Transverse colon (tissue), 4 donors: ENCODE measurements at regions of chr9 and their contacts with region 1.

Region 1: DNA sequence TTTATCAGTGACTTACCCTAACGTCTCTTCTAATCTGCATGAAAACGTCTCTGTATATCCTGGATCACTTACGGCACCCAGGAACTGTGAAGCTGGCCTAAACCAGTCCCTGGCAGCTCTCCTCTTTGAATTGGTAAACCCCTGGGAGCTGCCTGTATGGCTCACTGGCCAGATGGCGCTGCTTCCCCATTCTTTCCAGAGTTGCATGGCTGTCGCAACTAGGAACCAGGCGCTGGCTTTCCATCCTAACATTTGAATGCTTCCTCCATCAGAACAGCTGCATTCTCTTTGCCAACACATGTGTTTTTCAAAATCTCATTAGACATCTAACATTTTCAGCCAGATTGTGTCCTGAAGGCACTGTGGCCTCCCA is 8.0 kb upstream of the PCA3 start:
- DNase-seq: peak; percentile 31
- H3K4me3 ChIP-seq: no peak overlapping the region
- H3K27ac ChIP-seq: no peak overlapping the region
- H3K4me1 ChIP-seq: peaks cover 0 to 12% (median 0%) of the 10 kb centered on the region in 4 donors
- H3K27me3 ChIP-seq: no peaks in the 10 kb centered on the region
- CTCF ChIP-seq: peak in 2 of 5 experiments; percentile 30 to 34
- EP300 ChIP-seq: no peak
- POLR2A ChIP-seq: no peak

Region 2: DNA sequence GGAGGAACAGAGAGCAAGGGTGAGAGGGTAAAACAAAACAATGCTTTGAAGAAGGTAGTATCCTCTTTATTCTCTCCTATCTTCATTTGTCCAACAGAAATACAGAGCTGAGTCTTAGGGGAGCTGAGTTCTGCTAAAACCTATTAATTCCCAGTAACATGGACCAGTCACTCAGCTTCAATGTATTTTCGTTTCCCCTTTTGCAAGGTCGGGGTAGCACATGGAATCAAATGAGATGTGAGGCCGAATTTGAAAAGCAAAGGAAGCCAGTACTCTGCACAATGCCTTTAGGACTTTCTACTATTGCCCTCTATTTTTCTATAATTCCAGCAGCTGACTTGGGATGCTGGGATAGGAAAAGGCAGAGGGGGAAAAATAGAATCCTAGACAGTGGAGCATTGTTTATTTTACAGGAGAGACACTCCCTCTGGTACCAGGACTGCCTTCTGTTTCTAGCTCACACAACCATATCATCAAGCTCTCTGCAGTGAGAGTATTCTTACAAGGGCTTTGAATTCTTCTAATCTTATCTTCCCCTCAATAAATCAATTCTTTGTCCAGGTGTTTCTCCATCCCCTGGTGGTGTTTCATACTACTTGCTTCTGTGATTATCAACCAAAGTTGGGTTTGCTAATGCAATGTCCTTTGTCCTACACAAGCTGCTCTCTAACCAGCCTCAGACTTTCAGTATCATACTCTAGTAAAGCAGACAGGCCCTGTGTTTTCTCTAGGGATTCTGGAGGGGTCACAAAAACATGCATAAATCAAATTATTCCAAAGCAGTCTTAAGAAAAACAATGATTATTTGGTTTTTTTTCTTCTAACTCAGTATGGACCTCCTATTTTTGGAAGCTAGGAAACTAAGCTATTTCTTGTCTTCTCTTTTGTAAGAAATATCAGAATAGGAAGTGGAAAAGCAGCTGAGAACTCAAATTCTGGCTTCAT is 1326.5 kb before region 1 on chr9:
- in situ Hi-C with region 1: no loop called
- intact Hi-C with region 1: no loop called
- DNase-seq: no peak
- H3K4me3 ChIP-seq: no peak overlapping the region
- H3K27ac ChIP-seq: no peak overlapping the region
- H3K4me1 ChIP-seq: no peaks in the 10 kb centered on the region
- H3K27me3 ChIP-seq: no peaks in the 10 kb centered on the region
- CTCF ChIP-seq: no peak
- EP300 ChIP-seq: no peak
- POLR2A ChIP-seq: no peak

Region 3: DNA sequence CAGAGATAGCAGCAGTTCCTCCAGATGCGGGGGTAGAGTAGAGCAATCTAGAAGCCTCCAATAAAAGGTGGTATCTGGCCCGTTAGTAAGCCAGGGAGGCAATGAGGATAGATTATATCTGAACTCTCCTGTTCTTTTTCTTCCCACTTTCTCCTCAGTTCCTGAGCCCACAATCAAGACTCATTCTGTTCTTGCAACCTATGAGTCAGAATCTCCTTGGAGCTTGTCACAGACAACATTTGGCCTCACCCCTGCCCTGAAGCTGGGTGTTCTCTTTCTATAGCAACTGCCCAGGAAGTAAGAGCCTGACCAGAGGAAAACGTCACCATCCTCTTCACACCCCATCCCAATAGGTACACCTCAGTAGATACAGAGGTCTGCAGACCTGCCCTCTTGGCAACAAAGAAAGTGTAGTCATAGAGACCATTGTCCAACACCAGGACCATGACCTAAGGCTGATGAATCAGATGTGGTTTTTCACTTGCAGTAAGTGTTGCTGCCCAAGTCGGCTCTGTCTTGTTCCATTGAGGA is 68.3 kb before region 1 on chr9:
- in situ Hi-C with region 1: no loop called
- intact Hi-C with region 1: no loop called
- DNase-seq: no peak
- H3K4me3 ChIP-seq: no peak overlapping the region
- H3K27ac ChIP-seq: no peak overlapping the region
- H3K4me1 ChIP-seq: peaks cover 8 to 40% (median 15%) of the 10 kb centered on the region in 4 donors
- H3K27me3 ChIP-seq: no peaks in the 10 kb centered on the region
- CTCF ChIP-seq: no peak
- EP300 ChIP-seq: no peak
- POLR2A ChIP-seq: no peak

Region 4: DNA sequence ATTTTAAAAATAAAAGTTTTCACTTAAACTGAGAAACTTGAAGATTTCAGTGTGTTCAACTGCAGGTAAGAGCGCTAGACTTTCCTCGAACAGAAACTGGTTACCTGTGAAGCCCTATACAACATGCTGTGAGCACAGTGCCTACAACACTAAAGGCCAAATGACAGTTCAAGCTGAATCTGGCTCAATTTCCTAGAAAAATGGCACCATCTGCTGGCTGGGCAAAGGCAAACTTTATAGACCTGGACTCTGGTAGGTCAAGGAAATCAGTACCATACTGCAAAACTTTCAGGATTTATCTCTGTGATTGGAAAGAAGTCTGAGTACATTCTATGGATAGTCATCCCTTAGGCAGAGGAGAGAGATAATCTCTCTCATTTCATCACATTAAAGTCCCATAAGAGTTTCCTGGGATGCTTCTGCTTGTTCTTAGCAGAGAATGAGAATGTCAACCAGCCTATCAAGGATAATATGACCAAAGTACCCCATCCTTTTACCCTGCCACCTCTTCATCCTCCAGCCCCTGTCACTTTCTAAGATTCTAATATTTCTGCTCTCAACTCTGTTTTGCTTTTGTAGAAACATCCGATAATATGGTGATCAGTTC is 231.4 kb after region 1 on chr9:
- in situ Hi-C with region 1: loop called in 1 of 4 experiments (anchors 25 kb)
- intact Hi-C with region 1: loop called (anchors 10 kb)
- DNase-seq: peak; percentile 51
- H3K4me3 ChIP-seq: no peak overlapping the region
- H3K27ac ChIP-seq: no peak overlapping the region
- H3K4me1 ChIP-seq: no peaks in the 10 kb centered on the region
- H3K27me3 ChIP-seq: peaks cover 36% of the 10 kb centered on the region
- CTCF ChIP-seq: peak; percentile 51 to 66 (median 53)
- EP300 ChIP-seq: no peak
- POLR2A ChIP-seq: no peak

Region 5: GRCh38 chr9:77131399-77131798 is 375.1 kb after region 1 on chr9:
- in situ Hi-C with region 1: loop called in 1 of 4 experiments (anchors 25 kb)
- intact Hi-C with region 1: no loop called
- DNase-seq: no peak
- H3K4me3 ChIP-seq: no peak overlapping the region
- H3K27ac ChIP-seq: no peak overlapping the region
- H3K4me1 ChIP-seq: no peaks in the 10 kb centered on the region
- H3K27me3 ChIP-seq: peaks cover 43% of the 10 kb centered on the region
- CTCF ChIP-seq: no peak
- EP300 ChIP-seq: no peak
- POLR2A ChIP-seq: no peak

Region 6: DNA sequence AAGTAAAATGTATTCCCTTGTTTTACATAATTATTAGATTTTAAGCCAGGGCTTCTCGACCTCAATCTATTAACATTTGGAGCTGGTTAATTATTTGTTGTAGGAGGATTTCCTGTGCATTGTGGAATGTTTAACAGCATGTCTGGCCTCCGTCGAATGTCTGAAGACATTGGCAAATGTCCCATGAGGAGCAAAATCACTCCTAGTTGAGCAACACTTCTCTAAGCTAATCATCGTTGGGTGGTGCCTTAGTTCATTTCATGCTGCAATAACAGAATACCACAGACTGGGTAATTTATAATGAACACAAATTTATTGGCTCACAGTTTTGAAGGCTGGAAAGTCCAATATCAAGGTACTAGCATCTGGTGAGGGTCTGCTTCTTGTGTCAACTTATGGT is 407.6 kb after region 1 on chr9:
- in situ Hi-C with region 1: loop called in 1 of 4 experiments (anchors 25 kb)
- intact Hi-C with region 1: no loop called
- DNase-seq: no peak
- H3K4me3 ChIP-seq: no peak overlapping the region
- H3K27ac ChIP-seq: no peak overlapping the region
- H3K4me1 ChIP-seq: peaks cover 0 to 4% (median 0%) of the 10 kb centered on the region in 4 donors
- H3K27me3 ChIP-seq: no peaks in the 10 kb centered on the region
- CTCF ChIP-seq: no peak
- EP300 ChIP-seq: no peak
- POLR2A ChIP-seq: no peak